Activated naive CD4-positive, alpha-beta T cell treated with anti-CD3 and anti-CD28 coated beads for 36 hours (primary cell): ENCODE measurements at regions of chr2 and their contacts with region 1.

Region 1: GRCh38 chr2:46461011-46461674 is 18.2 kb upstream of the TMEM247 start:
- DNase-seq: peak; percentile 80
- H3K4me3 Mint-ChIP-seq: no peak overlapping the region
- H3K27ac Mint-ChIP-seq: no peak overlapping the region
- H3K4me1 Mint-ChIP-seq: no peaks in the 10 kb centered on the region
- H3K27me3 Mint-ChIP-seq: no peaks in the 10 kb centered on the region

Region 2: GRCh38 chr2:45643543-45644542 is 817.3 kb before region 1 on chr2:
- CTCF ChIA-PET with region 1: no interaction called
- intact Hi-C with region 1: loop called (anchors 2 kb)
- DNase-seq: peak; percentile 66
- H3K4me3 Mint-ChIP-seq: peak overlapping the region; percentile 36
- H3K27ac Mint-ChIP-seq: no peak overlapping the region
- H3K4me1 Mint-ChIP-seq: peaks cover 4% of the 10 kb centered on the region
- H3K27me3 Mint-ChIP-seq: peaks cover 22% of the 10 kb centered on the region

Region 3: DNA sequence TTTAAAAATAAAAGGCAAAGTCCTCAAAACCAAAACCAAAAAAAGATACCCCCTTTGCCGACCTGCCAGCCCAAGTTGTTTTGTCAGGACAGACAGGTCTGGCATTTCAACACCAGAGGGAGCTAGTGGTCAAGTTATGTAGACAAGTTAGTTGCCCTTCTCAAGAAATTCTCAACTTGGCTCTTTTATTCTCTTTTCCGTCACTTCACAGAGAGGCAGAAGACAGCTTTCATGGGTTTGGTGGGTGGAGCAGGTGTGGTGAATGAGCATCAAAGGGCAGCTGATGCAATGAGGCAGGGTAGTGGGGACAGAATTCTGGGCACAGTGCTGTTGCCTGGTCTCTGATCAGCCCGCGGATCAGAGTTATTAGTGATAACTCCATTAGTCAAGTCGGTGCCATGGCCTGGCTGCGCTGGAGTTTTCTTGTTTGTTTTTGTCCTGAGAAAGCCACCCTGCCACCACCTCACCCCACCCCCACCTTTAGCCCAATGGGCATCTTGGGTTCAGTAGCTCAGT is 467.6 kb before region 1 on chr2:
- CTCF ChIA-PET with region 1: interaction called, 4 read pairs
- intact Hi-C with region 1: loop called (anchors 1 kb)
- DNase-seq: peak; percentile 79
- H3K4me3 Mint-ChIP-seq: no peak overlapping the region
- H3K27ac Mint-ChIP-seq: no peak overlapping the region
- H3K4me1 Mint-ChIP-seq: peaks cover 9% of the 10 kb centered on the region
- H3K27me3 Mint-ChIP-seq: no peaks in the 10 kb centered on the region

Region 4: GRCh38 chr2:46010925-46011490 is 450.1 kb before region 1 on chr2:
- CTCF ChIA-PET with region 1: interaction called, 5 read pairs
- intact Hi-C with region 1: loop called (anchors 1 kb)
- DNase-seq: no peak
- H3K4me3 Mint-ChIP-seq: no peak overlapping the region
- H3K27ac Mint-ChIP-seq: no peak overlapping the region
- H3K4me1 Mint-ChIP-seq: no peaks in the 10 kb centered on the region
- H3K27me3 Mint-ChIP-seq: no peaks in the 10 kb centered on the region

Region 5: DNA sequence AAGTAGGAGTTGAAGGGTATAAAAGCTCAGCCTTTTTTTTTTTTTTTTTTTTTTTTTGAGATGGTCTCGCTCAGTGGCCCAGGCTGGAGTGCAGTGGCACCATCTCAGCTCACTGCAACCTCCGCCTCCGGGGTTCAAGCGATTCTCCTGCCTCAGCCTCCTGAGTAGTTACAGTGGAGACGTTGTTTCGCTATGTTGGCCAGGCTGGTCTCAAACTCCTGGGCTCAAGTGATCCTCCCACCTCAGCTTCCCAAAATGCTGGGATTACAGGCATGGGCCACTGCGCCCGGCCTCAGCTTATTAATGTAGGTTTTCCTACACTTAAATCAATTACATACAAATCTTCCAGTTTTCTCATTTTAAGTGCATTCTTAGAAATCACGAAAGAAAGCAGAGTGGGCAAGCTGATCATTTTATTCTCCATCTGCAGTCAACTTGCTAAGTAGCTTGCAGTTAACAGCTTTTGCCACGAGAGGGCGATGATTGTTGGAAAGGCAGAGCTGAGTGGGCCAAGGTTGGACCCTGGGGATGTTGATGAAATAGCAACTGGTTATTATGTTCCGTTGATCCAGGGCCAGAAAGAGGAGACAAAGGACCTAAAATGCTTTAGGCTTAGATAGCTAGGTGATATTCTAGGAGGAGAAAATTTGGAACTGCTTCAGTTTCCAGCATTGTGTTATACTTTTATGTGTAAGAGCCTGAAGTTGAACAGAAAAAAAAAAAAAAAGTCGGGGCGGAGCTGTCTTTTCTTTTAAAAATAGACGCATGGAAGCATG is 398.3 kb before region 1 on chr2:
- CTCF ChIA-PET with region 1: interaction called, 5 read pairs
- intact Hi-C with region 1: loop called (anchors 1 kb)
- DNase-seq: peak; percentile 86
- H3K4me3 Mint-ChIP-seq: no peak overlapping the region
- H3K27ac Mint-ChIP-seq: no peak overlapping the region
- H3K4me1 Mint-ChIP-seq: peaks cover 10% of the 10 kb centered on the region
- H3K27me3 Mint-ChIP-seq: no peaks in the 10 kb centered on the region